RWPE1 (cell line): ENCODE measurements at regions of chr20 and their contacts with region 1.

Region 1: DNA sequence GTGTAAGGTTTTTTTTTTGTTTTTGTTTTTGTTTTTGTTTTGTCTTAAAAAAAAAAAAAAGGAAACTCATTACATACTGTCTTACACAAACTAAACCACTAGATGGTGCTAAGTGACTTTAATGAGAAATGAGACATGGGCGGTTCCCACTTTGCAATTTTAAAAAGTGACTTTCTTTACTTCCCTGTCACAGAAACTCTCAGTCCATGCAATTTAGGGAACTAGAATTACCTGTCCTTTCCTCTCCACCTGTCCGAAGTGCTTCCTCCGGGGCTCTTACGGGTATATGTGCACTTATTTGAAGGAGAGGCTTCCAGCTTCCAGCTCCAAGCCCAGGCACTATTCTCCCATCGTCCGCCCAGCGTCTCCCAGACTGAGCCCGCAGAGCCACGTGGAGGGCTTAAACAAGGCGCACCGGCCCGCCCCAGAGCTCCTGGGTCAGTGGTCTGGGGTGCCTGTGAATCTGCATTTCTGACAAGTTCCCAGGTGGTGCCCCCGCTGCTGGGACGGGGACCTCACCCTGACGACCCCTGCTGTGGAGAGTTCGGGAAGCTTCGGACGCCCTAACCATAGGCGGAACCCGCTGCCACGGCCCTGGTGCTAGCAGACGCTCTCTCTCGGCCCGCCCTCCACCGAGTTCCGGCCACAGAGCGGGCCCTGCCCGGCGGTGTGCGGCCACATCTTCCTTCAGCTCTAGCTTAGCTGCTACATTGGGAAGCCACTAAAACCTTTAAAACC is 26.1 kb downstream of the BFSP1 start:
- DNase-seq: peak; percentile 59
- H3K27ac ChIP-seq: peak overlapping the region; percentile 94
- CTCF ChIP-seq: peak; percentile 83

Region 2: GRCh38 chr20:17298171-17298570 is 206.9 kb before region 1 on chr20:
- CTCF ChIA-PET with region 1: no interaction called
- POLR2A ChIA-PET with region 1: no interaction called
- DNase-seq: no peak
- H3K27ac ChIP-seq: no peak overlapping the region
- CTCF ChIP-seq: no peak

Region 3: GRCh38 chr20:17343656-17344452 is 161.2 kb before region 1 on chr20:
- CTCF ChIA-PET with region 1: no interaction called
- POLR2A ChIA-PET with region 1: no interaction called
- DNase-seq: no peak
- H3K27ac ChIP-seq: no peak overlapping the region
- CTCF ChIP-seq: no peak

Region 4: GRCh38 chr20:17617551-17618223 is 112.6 kb after region 1 on chr20:
- CTCF ChIA-PET with region 1: interaction called, 25 read pairs
- POLR2A ChIA-PET with region 1: no interaction called
- DNase-seq: peak; percentile 54
- H3K27ac ChIP-seq: peak overlapping the region; percentile 76
- CTCF ChIP-seq: peak; percentile 80

Region 5: DNA sequence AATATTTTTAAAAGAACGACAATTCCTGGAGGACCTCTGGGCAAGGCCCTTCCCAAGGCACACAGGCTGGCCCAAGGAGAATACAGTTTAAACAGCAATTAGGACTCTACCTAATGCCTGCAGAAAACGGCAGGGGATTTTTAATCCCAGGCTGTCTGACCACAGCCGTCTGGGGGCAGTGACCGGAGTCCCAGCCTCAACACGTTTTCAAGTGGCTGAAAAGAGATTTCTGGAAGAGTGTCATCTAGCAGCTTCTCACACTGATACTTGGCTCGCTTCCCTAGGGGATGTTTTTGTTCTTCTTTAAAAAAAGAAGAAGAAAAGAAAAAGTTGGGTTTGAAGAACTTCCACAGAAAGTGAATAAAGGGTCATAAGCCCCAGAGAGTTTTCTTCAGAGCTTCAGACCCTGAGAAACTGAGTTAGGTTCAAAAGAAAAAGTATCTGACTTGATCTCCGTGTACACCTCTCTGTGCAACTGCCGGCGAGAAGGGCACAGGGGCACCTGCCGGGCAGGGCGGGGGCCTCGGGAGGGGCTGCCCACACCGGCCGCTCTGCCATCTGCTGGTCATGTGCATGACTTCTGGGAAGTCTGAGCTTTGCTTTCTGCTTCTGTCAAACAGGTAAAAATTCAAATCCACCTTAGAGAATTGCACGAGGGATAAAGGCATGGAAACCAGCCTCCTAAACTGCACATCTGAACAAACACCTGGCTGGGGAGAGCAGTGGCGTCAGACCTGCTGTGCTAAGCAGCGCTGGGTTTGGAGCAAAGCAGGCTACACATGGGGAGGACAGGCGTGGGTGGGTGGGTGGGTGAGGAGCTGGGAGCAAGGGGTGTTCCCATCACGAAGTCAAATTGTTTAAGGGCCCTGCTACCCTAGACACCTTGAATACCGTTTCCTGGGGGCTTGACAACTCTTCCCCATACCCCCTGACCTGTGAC is 144.0 kb after region 1 on chr20:
- CTCF ChIA-PET with region 1: interaction called, 13 read pairs
- POLR2A ChIA-PET with region 1: no interaction called
- DNase-seq: peak; percentile 37
- H3K27ac ChIP-seq: peak overlapping the region; percentile 9; the same call in 1 of the 2 replicates
- CTCF ChIP-seq: no peak